Posterior vena cava (tissue), 2 donors: ENCODE measurements at regions of chr13 and their contacts with region 1.

Region 1: GRCh38 chr13:20940083-20940880 is 37.7 kb upstream of the XPO4 start:
- DNase-seq: no peak

Region 2: DNA sequence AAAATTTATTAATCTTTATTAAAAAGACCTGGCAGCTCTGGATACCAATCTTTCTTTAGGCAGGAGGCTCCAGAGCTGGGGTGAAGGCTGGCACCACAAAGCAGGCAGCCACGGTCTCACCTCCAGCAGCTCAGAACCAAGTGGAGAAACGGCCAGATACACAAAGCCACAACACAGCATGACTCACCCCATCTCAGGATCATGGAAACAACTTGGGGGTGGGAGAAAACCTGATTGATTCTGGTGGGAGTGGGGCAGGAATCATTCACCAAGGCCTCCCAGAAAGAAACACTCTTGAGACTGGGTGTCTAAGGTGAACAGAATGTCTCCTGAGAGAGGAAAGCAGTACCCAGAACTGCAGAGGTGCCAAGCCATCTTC is 478.8 kb before region 1 on chr13:
- intact Hi-C with region 1: no loop called
- DNase-seq: no peak

Region 3: DNA sequence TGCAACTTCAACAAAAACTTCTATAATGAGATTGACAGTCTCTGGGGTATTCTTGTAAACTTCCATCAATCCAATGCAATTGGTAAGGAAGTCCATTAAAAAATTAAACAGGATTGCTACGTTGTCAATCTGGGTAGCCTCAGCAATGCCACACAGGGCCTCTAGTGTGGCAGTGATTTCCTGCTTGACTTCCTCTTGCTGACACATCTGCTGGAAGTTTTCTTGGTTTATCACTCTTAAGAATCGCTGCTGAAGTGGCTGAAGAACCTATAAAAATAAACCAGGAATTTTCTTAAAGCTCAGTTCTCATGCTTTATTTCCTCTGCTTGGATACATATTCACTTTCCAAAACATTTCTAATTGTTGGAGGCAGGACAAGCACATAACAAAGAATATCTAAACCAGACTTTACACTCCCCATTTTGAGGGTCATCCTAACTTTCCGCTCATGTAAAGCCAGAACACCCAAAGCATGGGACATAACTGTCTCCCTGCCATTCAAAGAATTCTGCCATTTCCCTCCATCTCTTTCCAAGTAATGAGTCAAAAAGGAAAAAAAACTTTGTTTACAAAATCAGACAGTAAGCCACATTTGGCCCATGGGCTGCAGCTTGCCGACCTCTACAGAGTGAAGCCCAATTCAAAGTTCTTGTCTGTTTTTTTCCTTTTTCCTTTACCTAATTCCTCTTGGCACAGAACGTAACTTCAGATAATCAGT is 143.3 kb before region 1 on chr13:
- intact Hi-C with region 1: no loop called
- DNase-seq: no peak

Region 4: DNA sequence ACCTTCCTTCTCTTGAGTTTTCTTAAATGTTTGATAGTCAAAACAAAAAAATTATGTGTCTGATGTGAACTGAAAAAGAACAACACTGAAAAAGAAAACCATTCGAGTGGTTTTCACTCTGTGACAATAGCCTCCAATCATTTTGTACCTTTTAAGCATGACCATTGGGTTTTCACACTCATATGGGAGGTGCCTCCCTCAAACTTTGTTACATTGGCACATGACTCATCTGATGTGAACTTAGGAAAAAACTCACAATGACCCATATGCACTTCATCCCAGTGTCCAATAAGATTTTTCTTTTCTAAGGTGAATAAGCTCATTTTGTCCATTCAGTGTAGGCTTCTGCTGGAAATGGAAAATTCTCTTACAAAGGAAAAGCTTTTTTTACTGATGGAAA is 28.9 kb after region 1 on chr13:
- intact Hi-C with region 1: no loop called
- DNase-seq: no peak

Region 5: DNA sequence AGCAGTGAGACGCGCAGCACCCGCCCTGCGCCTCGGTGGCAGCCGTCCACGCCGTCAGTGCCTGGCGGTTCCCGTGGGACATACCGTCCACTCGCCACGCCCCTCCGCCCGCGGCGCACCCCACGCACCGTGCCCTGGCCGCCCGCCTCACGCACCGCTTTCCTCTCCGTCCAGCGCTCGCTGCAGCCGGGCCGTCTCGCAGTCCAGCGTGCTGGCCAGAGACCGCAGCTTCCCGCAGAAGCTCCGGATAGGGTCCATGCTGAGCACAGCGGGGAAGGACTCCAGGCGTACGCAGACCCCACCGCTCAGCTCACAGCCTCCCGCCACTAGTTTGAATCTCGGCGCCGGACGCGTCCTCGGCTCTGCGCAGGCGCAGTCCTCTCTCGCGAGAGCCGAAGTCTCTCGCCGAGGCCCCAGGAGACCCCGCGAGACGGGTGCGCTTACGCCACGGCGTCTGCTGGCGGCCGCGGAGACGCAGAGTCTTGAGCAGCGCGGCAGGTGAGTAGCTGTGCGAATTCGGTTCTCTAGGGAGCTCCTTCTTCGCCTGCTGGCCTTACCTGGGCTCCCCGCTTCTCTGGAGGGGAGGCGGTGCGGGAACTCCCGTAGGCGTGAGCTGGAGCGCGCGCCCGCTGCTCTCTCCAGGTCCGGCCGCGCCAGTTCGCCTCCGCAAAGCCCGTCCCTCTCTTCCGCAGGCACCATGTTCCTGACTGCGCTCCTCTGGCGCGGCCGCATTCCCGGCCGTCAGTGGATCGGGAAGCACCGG is 236.1 kb after region 1 on chr13 and contains the starts of genes MRPL57 and SKA3:
- intact Hi-C with region 1: loop called in 1 of 2 experiments (anchors 5 kb)
- DNase-seq: peak; percentile 97
- total RNA-seq, gene MRPL57: 10.1 to 11.1 TPM
- total RNA-seq, gene SKA3: 0.86 to 1.7 TPM